ENCODE measurements at regions of chr14 and their contacts with region 1.

Region 1: DNA sequence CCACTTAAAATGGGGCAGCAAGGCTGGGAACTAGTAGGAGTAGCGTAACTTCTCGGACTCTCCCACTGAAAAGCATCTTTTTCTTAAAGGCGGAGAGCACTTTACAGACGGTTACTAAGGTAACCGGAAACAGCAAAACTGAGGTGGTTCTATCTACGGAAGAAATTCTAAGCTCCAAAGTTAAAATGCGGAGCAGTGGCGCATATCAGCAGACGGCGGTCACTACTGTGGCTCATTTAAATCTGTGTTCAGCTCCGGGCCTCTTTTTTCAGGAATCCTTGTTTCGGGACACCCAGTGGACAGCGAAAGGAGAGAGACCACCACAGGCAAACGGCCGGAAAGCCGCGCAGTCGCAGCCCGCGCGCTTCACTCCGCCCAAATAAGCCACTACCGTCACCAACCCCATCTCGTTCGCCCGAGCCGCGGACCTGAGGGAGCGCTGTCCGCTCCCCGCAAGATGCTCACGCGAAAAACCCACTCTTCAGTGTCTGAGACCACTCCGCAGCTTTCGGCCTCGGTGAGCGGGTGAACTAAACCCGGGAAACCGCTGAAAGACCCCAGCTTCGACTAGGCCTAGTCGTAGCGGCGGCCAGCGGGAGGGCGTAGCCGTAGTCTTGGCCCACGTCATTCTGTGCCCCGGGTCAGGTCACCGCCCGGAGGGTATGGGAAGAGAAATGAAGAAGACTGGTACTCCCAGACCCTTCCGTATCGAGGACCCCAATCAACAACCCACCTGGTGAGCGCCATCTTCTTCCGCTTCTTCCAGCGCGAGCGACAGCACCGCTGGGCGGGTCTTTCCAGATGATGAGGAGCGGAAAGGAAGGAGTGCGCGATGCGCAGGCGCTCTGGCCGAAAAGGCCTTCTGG is at the start of gene SNW1:
- DNase-seq: peak; percentile 91
- ATAC-seq: peak; percentile 81
- H3K4me3 Mint-ChIP-seq: peak within 1 kb of the TSS; percentile 99
- H3K27ac Mint-ChIP-seq: peak within 1 kb of the TSS; percentile 99
- H3K4me1 Mint-ChIP-seq: peaks cover 31% of the 10 kb centered on the region
- H3K27me3 Mint-ChIP-seq: no peaks in the 10 kb centered on the region
- CTCF ChIP-seq: no peak
- total RNA-seq, gene SNW1: 81.4 to 92.1 TPM (median 83.8 TPM) in 3 replicates

Region 2: DNA sequence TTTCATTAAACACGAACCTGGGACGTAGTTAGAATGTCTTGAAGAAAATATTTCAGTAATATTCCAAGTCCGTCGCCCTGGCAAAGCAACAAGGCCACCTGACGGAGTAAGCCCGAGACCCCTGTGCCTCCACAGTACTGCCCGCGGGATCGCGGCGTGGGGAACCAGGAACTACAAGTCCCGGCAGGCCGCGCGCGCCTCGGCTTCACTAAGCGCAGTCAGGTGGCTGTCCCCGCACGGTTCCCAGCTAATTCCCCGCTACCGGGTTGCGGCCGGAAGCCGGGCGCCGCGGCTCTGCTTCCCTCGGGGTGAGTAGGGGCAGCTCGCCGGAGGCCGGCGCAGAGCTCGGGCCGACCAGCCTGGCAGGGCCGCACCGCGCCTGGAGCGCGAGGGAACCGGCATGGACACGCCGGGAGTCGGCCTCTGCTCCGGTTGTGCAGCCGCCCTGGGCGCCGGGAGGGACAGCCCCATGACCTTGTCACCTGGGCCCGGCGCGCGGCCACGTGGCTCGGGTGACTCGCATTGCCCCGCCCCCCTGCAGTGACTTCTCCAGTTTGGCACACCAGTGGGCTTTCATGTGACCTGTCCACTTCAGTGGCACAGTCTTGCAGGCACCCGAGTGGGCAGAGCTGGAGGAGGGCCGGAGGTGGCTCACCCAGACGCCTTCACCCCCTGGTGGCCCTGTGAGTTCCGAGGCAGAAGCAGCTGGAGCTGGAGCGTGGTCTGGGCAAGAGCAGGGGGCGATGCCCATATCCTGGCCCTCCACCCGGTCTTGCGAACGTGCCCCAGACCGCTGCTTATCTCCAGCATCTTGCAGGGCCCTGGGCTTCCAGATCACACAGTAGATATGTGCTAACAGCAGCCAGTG is 39.5 kb after region 1 on chr14 and contains the start of gene ADCK1:
- CTCF ChIA-PET with region 1: interaction called, 13 read pairs
- POLR2A ChIA-PET with region 1: interaction called, 3 read pairs
- DNase-seq: peak; percentile 85
- ATAC-seq: peak; percentile 81
- H3K4me3 Mint-ChIP-seq: peak within 1 kb of the TSS; percentile 81
- H3K27ac Mint-ChIP-seq: peak within 1 kb of the TSS; percentile 68
- H3K4me1 Mint-ChIP-seq: peaks cover 20% of the 10 kb centered on the region
- H3K27me3 Mint-ChIP-seq: no peaks in the 10 kb centered on the region
- CTCF ChIP-seq: no peak
- total RNA-seq, gene ADCK1: 11.4 to 12.8 TPM (median 12.0 TPM) in 3 replicates

Measured in WTC11 (cell line).